Dorsolateral prefrontal cortex (tissue), 120 donors: ENCODE measurements at regions of chr10 and their contacts with region 1.

Region 1: GRCh38 chr10:90999512-91000172 is 78.8 kb upstream of the ANKRD1 start:
- DNase-seq: no peak
- H3K4me3 ChIP-seq: no peak overlapping the region
- H3K27ac ChIP-seq: no peak overlapping the region
- H3K27me3 ChIP-seq: no peaks in the 10 kb centered on the region
- CTCF ChIP-seq: no peak

Region 2: GRCh38 chr10:90912174-90912573 is 87.5 kb before region 1 on chr10:
- intact Hi-C with region 1: loop called in 1 of 2 experiments (anchors 5 kb)
- DNase-seq: no peak
- H3K4me3 ChIP-seq: peak overlapping the region in 1 of 59 donors; percentile 40
- H3K27ac ChIP-seq: no peak overlapping the region
- H3K27me3 ChIP-seq: no peaks in the 10 kb centered on the region
- CTCF ChIP-seq: no peak